HEK293 (cell line): ENCODE measurements at regions of chr19 and their contacts with region 1.

Region 1: DNA sequence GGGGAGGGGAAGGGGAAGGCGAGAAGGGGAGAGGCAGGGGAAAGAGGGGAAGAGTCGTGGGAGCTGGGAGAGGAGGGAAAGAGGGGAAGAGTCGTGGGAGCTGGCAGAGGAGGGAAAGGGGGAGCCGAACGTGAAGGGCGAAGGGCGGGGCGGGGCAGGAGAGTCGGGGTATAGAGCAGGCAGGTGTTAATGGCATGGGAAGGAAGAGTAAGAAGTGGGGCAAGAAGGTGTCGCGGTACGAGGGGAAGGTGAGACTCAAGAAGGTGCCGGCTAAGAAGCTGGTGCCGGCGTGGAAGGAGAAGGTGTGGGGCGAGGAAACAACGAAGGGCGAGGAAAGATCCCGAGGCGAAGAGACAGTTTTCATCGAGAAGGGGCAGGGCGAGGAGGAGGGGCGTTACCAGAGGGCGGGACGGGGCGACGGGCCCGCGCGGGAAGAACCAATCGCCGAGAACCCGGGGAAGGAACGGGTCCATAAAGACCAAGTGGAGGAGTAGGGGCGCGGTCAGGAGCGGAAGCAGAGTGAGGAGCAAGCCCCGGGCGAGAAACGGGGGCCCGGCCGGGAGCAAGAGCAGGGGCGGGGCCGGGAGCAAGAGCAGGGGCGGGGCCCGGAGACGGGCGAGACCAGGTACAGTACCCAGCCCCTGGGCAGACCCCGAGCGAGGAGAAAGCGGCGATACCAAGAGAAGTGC is 463 bp downstream of the CATSPERG start:
- H3K4me3 ChIP-seq: peak overlapping the region; percentile 66
- H3K27ac ChIP-seq: peak overlapping the region; percentile 80
- H3K4me1 ChIP-seq: peaks cover 14% of the 10 kb centered on the region
- CTCF ChIP-seq: no peak

Region 2: GRCh38 chr19:37954421-37954874 is 381.6 kb before region 1 on chr19:
- CTCF ChIA-PET with region 1: interaction called, 4 read pairs
- POLR2A ChIA-PET with region 1: interaction called, 11 read pairs
- H3K4me3 ChIP-seq: no peak overlapping the region
- H3K27ac ChIP-seq: peak overlapping the region; percentile 8; the same call in 1 of the 2 replicates
- H3K4me1 ChIP-seq: peaks cover 19% of the 10 kb centered on the region
- CTCF ChIP-seq: no peak

Region 3: GRCh38 chr19:38173291-38174041 is 162.6 kb before region 1 on chr19:
- CTCF ChIA-PET with region 1: no interaction called
- POLR2A ChIA-PET with region 1: no interaction called
- H3K4me3 ChIP-seq: no peak overlapping the region
- H3K27ac ChIP-seq: no peak overlapping the region
- H3K4me1 ChIP-seq: no peaks in the 10 kb centered on the region
- CTCF ChIP-seq: no peak

Region 4: DNA sequence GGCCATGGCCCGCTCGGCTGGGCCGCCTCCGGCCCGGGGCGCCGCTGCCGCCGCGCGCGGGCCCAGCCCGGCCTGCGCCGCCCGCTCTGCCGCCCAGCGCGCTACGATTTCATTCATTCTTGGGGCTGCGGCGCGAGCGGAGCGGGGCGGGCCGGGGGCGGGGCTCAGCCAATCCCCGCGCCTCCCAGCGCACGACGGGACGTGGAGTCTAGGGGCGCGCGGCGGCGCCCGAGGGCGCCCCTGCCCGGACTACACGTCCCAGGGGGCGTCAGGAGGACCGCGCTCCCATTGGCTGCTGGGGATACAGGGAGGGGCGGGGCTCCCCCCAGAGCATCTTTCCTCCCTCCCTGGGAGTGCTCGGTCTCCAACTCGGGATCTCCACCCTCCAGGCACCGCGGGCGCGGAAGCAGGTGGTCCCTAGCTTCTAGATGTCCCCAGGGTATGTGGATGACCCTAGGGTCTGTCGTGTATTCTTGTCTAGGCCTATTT is 106.5 kb before region 1 on chr19:
- CTCF ChIA-PET with region 1: interaction called, 96 read pairs
- POLR2A ChIA-PET with region 1: interaction called, 8 read pairs
- H3K4me3 ChIP-seq: peak overlapping the region; percentile 40
- H3K27ac ChIP-seq: no peak overlapping the region
- H3K4me1 ChIP-seq: peaks cover 10% of the 10 kb centered on the region
- CTCF ChIP-seq: peak; percentile 51

Region 5: GRCh38 chr19:38245826-38246498 is 90.1 kb before region 1 on chr19:
- CTCF ChIA-PET with region 1: interaction called, 183 read pairs
- POLR2A ChIA-PET with region 1: interaction called, 11 read pairs
- H3K4me3 ChIP-seq: no peak overlapping the region
- H3K27ac ChIP-seq: no peak overlapping the region
- H3K4me1 ChIP-seq: peaks cover 6% of the 10 kb centered on the region; the same call in 1 of the 2 replicates
- CTCF ChIP-seq: no peak

Region 6: GRCh38 chr19:38263689-38264485 is 72.2 kb before region 1 on chr19:
- CTCF ChIA-PET with region 1: interaction called, 14 read pairs
- POLR2A ChIA-PET with region 1: interaction called, 11 read pairs
- H3K4me3 ChIP-seq: peak overlapping the region; percentile 52
- H3K27ac ChIP-seq: peak overlapping the region; percentile 90
- H3K4me1 ChIP-seq: peaks cover 44% of the 10 kb centered on the region
- CTCF ChIP-seq: no peak

Region 7: GRCh38 chr19:38361633-38362075 is 25.6 kb after region 1 on chr19:
- CTCF ChIA-PET with region 1: interaction called, 6 read pairs
- POLR2A ChIA-PET with region 1: interaction called, 15 read pairs
- H3K4me3 ChIP-seq: peak overlapping the region; percentile 55
- H3K27ac ChIP-seq: no peak overlapping the region
- H3K4me1 ChIP-seq: peaks cover 10% of the 10 kb centered on the region
- CTCF ChIP-seq: peak; percentile 86

Region 8: DNA sequence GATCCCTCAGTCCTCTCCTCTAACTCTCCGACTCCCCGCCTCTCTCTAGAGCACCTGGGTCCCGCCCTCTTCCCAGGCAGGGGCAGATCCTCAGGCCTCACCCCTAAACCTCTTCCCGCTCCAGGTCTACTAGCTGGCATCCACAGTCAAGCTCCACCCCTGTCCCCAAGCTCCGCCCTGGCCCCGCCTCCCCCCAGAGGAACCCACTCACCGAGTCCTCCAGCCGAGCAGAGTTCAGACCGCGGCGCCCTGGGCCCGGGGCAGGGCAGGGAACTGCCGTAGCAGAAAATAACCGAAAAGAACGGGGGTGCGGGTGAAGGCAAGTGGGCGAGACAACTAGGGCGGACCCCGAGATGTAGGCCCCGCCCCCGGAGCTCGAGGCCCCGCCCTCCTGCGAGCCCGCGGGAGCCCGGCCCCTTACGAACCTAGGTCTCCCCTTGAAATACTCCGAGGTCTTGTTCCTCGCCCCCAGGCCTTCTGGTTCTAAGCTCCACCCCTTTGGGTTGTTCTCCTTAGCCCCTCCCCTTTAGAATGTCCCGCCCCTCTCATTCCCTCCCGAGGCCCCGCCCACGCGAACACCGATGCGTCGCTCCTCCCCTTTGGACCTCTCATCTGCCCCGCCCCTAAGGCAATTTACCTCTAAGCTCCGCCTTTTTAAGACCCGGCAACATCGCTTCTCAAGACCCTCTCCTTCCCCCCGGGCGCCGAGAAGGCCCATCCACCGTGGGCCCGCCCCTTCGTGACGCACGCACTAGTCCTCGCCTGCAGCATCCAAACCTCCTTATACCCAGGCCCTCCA is 51.7 kb after region 1 on chr19 and contains the start of gene GGN:
- CTCF ChIA-PET with region 1: interaction called, 6 read pairs
- POLR2A ChIA-PET with region 1: interaction called, 25 read pairs
- H3K4me3 ChIP-seq: peak within 1 kb of the TSS; percentile 56
- H3K27ac ChIP-seq: peak within 1 kb of the TSS; percentile 63
- H3K4me1 ChIP-seq: peaks cover 19% of the 10 kb centered on the region
- CTCF ChIP-seq: no peak